Ascending aorta (tissue), 2 donors: ENCODE measurements at regions of chr10 and their contacts with region 1.

Region 1: GRCh38 chr10:87861953-87862678 is 1.2 kb downstream of the KLLN start:
- DNase-seq: peak; percentile 84 to 98
- H3K4me3 ChIP-seq: peak overlapping the region; percentile 100
- H3K27ac ChIP-seq: peak overlapping the region; percentile 92 to 100
- H3K4me1 ChIP-seq: peaks cover 0 to 7% of the 10 kb centered on the region in 2 donors
- H3K27me3 ChIP-seq: no peaks in the 10 kb centered on the region
- CTCF ChIP-seq: no peak

Region 2: DNA sequence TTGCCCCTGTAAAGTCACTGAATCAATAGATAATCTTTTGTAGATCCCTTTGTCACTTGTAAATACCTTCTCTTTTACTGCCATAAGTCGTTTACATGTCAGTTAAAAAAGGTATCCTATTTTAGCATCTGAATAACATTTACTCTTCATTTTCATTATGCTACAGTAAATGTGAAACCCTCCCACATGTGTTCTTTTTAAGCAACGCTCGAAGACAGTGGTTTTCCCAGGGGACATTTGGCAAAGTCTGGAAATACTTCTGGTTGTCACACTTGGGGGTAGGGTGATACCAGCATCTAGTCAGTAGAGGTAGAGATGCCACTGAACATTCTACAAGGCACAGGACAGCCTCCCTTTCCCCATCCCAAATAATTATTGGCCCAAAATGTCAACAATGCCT is 67.8 kb before region 1 on chr10:
- intact Hi-C with region 1: no loop called
- DNase-seq: no peak
- H3K4me3 ChIP-seq: no peak overlapping the region
- H3K27ac ChIP-seq: no peak overlapping the region
- H3K4me1 ChIP-seq: peaks cover 0 to 2% of the 10 kb centered on the region in 2 donors
- H3K27me3 ChIP-seq: no peaks in the 10 kb centered on the region
- CTCF ChIP-seq: no peak

Region 3: DNA sequence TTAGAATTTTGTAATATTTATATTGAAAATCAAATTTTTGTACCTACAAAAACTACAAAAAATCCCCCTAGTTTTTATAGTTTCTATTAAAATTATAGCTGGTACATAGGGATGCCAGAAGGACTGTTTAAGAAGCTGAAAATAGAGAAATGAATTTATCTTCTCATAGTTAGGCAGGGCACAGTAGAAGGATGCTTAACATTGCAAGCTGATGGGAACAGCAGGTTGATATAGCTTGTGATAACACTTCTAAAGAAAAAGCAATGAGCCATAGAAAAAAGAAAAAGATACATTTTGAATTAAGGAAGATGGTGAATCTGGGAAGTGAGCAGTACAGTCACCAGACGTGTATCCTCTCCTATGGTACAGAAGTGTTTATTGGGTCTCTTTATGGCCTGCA is 33.3 kb after region 1 on chr10:
- intact Hi-C with region 1: loop called (anchors 5 kb)
- DNase-seq: no peak
- H3K4me3 ChIP-seq: no peak overlapping the region
- H3K27ac ChIP-seq: peak overlapping the region; percentile 74 to 81
- H3K4me1 ChIP-seq: peaks cover 0 to 41% of the 10 kb centered on the region in 2 donors
- H3K27me3 ChIP-seq: no peaks in the 10 kb centered on the region
- CTCF ChIP-seq: no peak

Region 4: DNA sequence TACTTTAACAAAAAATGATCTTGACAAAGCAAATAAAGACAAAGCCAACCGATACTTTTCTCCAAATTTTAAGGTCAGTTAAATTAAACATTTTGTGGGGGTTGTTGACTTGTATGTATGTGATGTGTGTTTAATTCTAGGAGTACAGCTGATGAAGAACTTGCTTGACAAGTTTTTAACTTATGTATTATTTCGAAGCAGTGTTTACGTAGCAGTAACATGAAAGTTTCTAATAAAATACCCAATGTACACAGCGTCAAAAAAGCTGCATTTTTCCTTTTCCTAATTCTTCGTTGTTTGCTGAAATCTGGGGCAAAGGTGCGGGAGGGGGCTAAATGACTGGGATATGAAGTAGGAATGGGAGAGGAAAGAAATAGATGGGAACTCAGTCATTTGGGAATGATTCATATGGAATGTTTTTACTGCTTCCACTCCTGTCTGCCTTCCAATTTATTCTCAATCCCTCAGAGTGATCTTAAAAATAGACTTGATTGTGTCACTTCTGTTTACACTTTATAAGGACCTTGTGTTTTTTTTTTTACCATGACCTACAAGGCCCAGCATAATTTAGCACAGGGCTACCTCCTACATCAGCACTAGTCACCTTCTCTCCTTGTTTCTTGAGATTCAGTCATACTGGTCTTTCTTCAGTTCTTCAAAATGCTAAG is 99.1 kb after region 1 on chr10:
- intact Hi-C with region 1: loop called (anchors 2 kb)
- DNase-seq: no peak
- H3K4me3 ChIP-seq: no peak overlapping the region
- H3K27ac ChIP-seq: peak overlapping the region; percentile 63 to 73
- H3K4me1 ChIP-seq: peaks cover 0 to 23% of the 10 kb centered on the region in 2 donors
- H3K27me3 ChIP-seq: no peaks in the 10 kb centered on the region
- CTCF ChIP-seq: no peak

Region 5: GRCh38 chr10:88064608-88065382 is 202.7 kb after region 1 on chr10:
- intact Hi-C with region 1: loop called (anchors 5 kb)
- DNase-seq: peak in 1 of 2 donors; percentile 84
- H3K4me3 ChIP-seq: no peak overlapping the region
- H3K27ac ChIP-seq: no peak overlapping the region
- H3K4me1 ChIP-seq: peaks cover 14 to 31% of the 10 kb centered on the region in 2 donors
- H3K27me3 ChIP-seq: no peaks in the 10 kb centered on the region
- CTCF ChIP-seq: no peak

Region 6: DNA sequence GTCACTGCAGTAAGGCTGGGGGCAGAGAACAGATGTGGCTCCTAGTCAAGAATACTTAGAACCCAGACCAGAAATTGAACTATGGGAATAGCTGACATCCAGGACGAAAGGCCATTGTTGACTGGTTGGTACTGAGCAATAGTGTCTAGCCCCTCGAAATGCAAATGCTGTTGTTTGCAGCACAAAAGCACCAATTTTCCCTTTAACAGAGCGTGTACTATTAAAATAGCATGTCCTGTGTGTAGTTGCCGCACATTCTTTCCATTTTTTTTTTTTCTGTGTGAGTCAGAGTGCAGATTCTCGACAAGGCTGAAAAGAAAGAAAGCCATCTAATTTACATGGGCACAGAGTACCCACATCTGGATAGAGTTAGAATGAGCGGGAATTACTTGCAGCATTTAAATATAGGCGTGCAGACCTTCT is 303.7 kb after region 1 on chr10:
- intact Hi-C with region 1: loop called (anchors 5 kb)
- DNase-seq: no peak
- H3K4me3 ChIP-seq: peak overlapping the region in 1 of 2 donors; percentile 26
- H3K27ac ChIP-seq: peak overlapping the region; percentile 73 to 78
- H3K4me1 ChIP-seq: peaks cover 0 to 15% of the 10 kb centered on the region in 2 donors
- H3K27me3 ChIP-seq: no peaks in the 10 kb centered on the region
- CTCF ChIP-seq: no peak

Region 7: GRCh38 chr10:88386821-88387773 is 525.0 kb after region 1 on chr10:
- intact Hi-C with region 1: loop called (anchors 1 kb)
- DNase-seq: peak in 1 of 2 donors; percentile 71
- H3K4me3 ChIP-seq: peak overlapping the region; percentile 48 to 49
- H3K27ac ChIP-seq: peak overlapping the region; percentile 73 to 78
- H3K4me1 ChIP-seq: peaks cover 7 to 9% of the 10 kb centered on the region in 2 donors
- H3K27me3 ChIP-seq: no peaks in the 10 kb centered on the region
- CTCF ChIP-seq: no peak